ENCODE measurements at regions of chr17 and their contacts with region 1.

Region 1: GRCh38 chr17:5468075-5468473 is 708 bp downstream of the DHX33 start:
- DNase-seq: no peak

Region 2: GRCh38 chr17:5419356-5419958 is 48.6 kb before region 1 on chr17 and contains the start of gene NUP88:
- intact Hi-C with region 1: loop called (anchors 2 kb)
- DNase-seq: peak; percentile 94 to 100 (median 98)

Region 3: DNA sequence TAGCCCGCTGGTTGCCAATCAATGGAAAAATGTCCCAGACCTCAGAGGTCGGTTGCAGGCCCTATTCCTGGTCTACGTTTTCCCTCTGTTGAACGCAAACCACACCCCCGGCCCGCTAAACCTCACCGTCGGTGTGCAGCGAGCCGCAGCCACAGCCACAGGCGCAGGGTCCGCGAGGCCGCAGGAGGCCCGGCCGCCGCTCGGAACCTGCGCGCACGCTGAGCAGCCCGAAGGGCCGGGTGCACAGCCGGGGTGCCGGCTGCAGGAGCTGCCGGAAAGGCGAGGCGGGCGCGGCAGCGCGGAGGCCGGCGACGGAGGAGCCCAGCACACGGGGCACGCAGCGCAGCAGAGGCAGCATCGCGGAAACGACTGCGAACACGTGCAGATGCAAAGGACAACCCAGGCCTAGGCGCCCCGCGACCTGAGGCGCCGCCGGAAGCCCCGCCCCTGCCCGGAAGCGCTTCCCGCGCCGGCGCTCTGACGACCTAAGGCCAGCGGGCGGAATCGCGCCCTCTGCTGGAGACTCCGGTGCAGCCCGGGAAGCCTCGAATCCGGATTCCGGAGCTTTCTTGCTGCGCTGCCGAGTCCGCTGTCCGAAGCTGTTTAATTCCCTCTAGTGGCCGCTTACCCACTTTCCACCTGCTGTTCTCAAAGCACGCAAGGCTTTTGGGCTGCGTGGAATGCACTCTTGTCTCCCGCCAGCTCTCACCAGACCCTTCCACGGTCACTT is 29.2 kb before region 1 on chr17 and contains the start of gene C1QBP:
- intact Hi-C with region 1: loop called (anchors 2 kb)
- DNase-seq: peak; percentile 84 to 99 (median 90)

Region 4: GRCh38 chr17:5486204-5487124 is 18.4 kb after region 1 on chr17 and contains the start of gene MIS12:
- intact Hi-C with region 1: loop called (anchors 1 kb)
- DNase-seq: peak; percentile 94 to 100 (median 98)